ENCODE measurements at regions of chr4 and their contacts with region 1.

Region 1: GRCh38 chr4:169024762-169025161 is 14.7 kb upstream of the CBR4 start:
- DNase-seq: no peak
- ATAC-seq: peak; percentile 50
- H3K4me3 Mint-ChIP-seq: no peak overlapping the region
- H3K27ac Mint-ChIP-seq: no peak overlapping the region
- H3K4me1 Mint-ChIP-seq: no peaks in the 10 kb centered on the region
- H3K27me3 Mint-ChIP-seq: peaks cover 3% of the 10 kb centered on the region
- CTCF ChIP-seq: no peak

Region 2: DNA sequence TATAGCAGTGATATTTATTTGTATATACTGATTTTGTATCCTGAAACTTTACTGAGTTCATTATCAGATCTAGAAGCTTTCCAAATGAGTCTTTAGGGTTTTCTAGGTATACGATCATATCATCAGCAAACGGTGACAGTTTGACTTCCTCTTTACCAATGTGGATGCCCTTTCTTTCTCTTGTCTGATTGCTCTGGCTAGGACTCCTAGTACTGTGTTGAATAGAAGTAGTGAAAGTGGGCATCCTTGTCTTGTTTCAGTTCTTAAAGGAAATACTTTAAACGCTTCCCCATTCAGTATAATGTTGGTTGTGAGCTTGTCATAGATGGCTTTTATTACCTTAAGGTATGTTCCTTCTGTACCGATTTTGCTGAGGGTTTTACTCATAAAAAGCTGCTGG is 52.2 kb before region 1 on chr4:
- CTCF ChIA-PET with region 1: no interaction called
- POLR2A ChIA-PET with region 1: interaction called, 11 read pairs
- intact Hi-C with region 1: no loop called
- DNase-seq: no peak
- ATAC-seq: no peak
- H3K4me3 Mint-ChIP-seq: no peak overlapping the region
- H3K27ac Mint-ChIP-seq: no peak overlapping the region
- H3K4me1 Mint-ChIP-seq: no peaks in the 10 kb centered on the region
- H3K27me3 Mint-ChIP-seq: no peaks in the 10 kb centered on the region
- CTCF ChIP-seq: no peak

Measured in activated B cell treated with CpG ODN at 0.5 μM for 24 hours (primary cell).